ENCODE measurements at regions of chr4 and their contacts with region 1.

Region 1: GRCh38 chr4:38034986-38035882 is 75.0 kb downstream of the PTTG2 start:
- DNase-seq: peak; percentile 32
- H3K4me3 ChIP-seq: no peak overlapping the region
- H3K27ac ChIP-seq: no peak overlapping the region
- H3K27me3 ChIP-seq: no peaks in the 10 kb centered on the region
- CTCF ChIP-seq: peak; percentile 70

Region 2: DNA sequence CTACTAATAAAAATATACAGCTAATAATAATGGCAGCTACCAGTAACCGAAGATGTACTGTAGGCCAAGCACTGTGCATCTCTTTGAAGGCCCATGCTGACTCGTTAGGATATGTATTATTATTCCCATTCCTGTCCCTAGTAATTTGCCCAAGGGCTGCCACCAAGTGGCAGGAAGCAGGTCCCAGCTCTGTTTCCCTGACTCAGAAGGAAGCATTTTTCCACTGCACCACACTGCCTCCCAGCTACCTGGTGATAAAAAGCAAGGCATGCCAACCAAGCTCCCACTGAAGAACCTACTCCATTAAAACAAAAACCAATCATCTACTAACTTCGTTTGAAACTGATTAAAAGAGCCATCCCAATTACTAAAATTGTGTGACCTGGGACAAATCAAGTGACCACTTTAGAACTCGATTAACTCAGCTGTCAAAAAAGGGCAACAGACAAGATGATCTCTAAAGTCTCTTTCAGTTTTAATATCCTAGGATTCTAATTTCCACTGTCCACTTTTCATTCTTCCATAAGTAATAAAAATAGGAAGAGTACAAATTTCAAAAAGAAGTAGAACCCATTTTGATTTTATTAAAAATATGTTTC is 233.1 kb before region 1 on chr4:
- CTCF ChIA-PET with region 1: interaction called, 85 read pairs
- POLR2A ChIA-PET with region 1: no interaction called
- DNase-seq: no peak
- H3K4me3 ChIP-seq: no peak overlapping the region
- H3K27ac ChIP-seq: no peak overlapping the region
- H3K27me3 ChIP-seq: peaks cover 5% of the 10 kb centered on the region
- CTCF ChIP-seq: peak; percentile 51

Region 3: GRCh38 chr4:37826295-37827029 is 208.8 kb before region 1 on chr4 and contains the start of gene PGM2:
- CTCF ChIA-PET with region 1: interaction called, 13 read pairs
- POLR2A ChIA-PET with region 1: no interaction called
- DNase-seq: no peak
- H3K4me3 ChIP-seq: peak within 1 kb of the TSS; percentile 88
- H3K27ac ChIP-seq: peak within 1 kb of the TSS; percentile 47
- H3K27me3 ChIP-seq: no peaks in the 10 kb centered on the region
- CTCF ChIP-seq: no peak
- polyA plus RNA-seq, gene PGM2: 17.6 and 24.1 TPM in 2 replicates

Region 4: GRCh38 chr4:37978248-37978924 is 56.8 kb before region 1 on chr4:
- CTCF ChIA-PET with region 1: interaction called, 10 read pairs
- POLR2A ChIA-PET with region 1: no interaction called
- DNase-seq: no peak
- H3K4me3 ChIP-seq: peak overlapping the region; percentile 70
- H3K27ac ChIP-seq: no peak overlapping the region
- H3K27me3 ChIP-seq: no peaks in the 10 kb centered on the region
- CTCF ChIP-seq: no peak

Region 5: GRCh38 chr4:38046728-38047489 is 11.7 kb after region 1 on chr4:
- CTCF ChIA-PET with region 1: interaction called, 14 read pairs
- POLR2A ChIA-PET with region 1: no interaction called
- DNase-seq: no peak
- H3K4me3 ChIP-seq: no peak overlapping the region
- H3K27ac ChIP-seq: no peak overlapping the region
- H3K27me3 ChIP-seq: no peaks in the 10 kb centered on the region
- CTCF ChIP-seq: peak; percentile 7

Measured in AG04450 (cell line).